Uterus (tissue), 4 donors: ENCODE measurements at regions of chr3 and their contacts with region 1.

Region 1: DNA sequence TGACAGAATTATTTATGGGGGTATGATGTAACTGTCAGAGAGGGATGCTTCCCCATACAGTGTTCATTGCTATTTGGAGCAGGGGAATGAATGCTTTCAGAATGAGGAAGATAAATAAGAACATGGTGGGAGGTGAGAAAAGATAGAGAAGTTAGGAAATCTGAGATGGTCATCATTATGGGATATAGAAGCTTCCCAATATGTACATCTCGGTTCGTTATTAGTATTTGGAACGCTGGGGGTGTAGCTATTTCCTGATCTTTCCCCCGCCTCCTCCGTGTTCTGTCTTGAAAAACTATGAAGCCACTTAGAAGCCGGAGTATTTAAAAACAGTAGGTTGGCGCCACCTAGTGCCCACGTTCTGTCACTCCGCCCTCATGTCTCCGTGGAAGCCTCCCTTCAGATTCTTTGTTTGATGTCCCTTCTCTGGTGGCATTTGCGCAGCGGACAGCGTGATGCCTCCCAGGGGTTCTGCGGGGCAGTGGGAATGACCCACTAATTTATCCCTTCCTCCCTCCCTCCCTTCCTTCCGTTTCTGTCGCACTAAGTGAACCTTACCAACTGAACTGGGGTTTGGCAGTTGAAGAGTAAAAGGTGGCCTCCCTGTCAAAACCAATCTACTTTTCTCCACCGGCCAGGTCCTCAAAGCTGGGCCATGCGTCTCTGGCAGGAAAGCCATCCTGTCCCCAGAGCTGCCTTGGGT is 184.5 kb downstream of the FEZF2 start:
- DNase-seq: peak; percentile 70 to 75
- H3K4me3 ChIP-seq: no peak overlapping the region
- H3K27ac ChIP-seq: no peak overlapping the region
- H3K4me1 ChIP-seq: no peaks in the 10 kb centered on the region
- H3K27me3 ChIP-seq: no peaks in the 10 kb centered on the region
- CTCF ChIP-seq: peak; percentile 76 to 83 (median 78)
- POLR2A ChIP-seq: no peak

Region 2: GRCh38 chr3:61561374-61562041 is 627.3 kb before region 1 on chr3 and contains the start of gene PTPRG:
- intact Hi-C with region 1: loop called (anchors 5 kb)
- DNase-seq: peak; percentile 90 to 91
- H3K4me3 ChIP-seq: peak within 1 kb of the TSS; percentile 77 to 86
- H3K27ac ChIP-seq: peak within 1 kb of the TSS; percentile 95 to 98
- H3K4me1 ChIP-seq: no peaks in the 10 kb centered on the region
- H3K27me3 ChIP-seq: no peaks in the 10 kb centered on the region
- CTCF ChIP-seq: no peak
- POLR2A ChIP-seq: peak; percentile 26 to 70
- total RNA-seq, gene PTPRG: 43.5 to 136 (median 62.6) TPM

Region 3: GRCh38 chr3:61858056-61858455 is 330.8 kb before region 1 on chr3:
- intact Hi-C with region 1: loop called (anchors 10 kb)
- DNase-seq: no peak
- H3K4me3 ChIP-seq: no peak overlapping the region
- H3K27ac ChIP-seq: no peak overlapping the region
- H3K4me1 ChIP-seq: no peaks in the 10 kb centered on the region
- H3K27me3 ChIP-seq: no peaks in the 10 kb centered on the region
- CTCF ChIP-seq: peak; percentile 12 to 46 (median 32)
- POLR2A ChIP-seq: no peak